ENCODE measurements at regions of chr22 and their contacts with region 1.

Region 1: GRCh38 chr22:29883045-29883774 is at the start of gene MTMR3:
- DNase-seq: peak; percentile 95
- H3K4me3 ChIP-seq: peak within 1 kb of the TSS; percentile 98 to 100 (median 98)
- H3K27ac ChIP-seq: peak within 1 kb of the TSS; percentile 94 to 99 (median 96)
- H3K4me1 ChIP-seq: peaks cover 0 to 42% (median 38%) of the 10 kb centered on the region in 4 donors
- H3K27me3 ChIP-seq: no peaks in the 10 kb centered on the region
- CTCF ChIP-seq: peak in 3 of 4 experiments; percentile 18 to 62 (median 41)
- EP300 ChIP-seq: no peak
- POLR2A ChIP-seq: peak in 1 of 2 donors; percentile 20
- total RNA-seq, gene MTMR3: 40.7 to 52.3 (median 41.3) TPM

Region 2: DNA sequence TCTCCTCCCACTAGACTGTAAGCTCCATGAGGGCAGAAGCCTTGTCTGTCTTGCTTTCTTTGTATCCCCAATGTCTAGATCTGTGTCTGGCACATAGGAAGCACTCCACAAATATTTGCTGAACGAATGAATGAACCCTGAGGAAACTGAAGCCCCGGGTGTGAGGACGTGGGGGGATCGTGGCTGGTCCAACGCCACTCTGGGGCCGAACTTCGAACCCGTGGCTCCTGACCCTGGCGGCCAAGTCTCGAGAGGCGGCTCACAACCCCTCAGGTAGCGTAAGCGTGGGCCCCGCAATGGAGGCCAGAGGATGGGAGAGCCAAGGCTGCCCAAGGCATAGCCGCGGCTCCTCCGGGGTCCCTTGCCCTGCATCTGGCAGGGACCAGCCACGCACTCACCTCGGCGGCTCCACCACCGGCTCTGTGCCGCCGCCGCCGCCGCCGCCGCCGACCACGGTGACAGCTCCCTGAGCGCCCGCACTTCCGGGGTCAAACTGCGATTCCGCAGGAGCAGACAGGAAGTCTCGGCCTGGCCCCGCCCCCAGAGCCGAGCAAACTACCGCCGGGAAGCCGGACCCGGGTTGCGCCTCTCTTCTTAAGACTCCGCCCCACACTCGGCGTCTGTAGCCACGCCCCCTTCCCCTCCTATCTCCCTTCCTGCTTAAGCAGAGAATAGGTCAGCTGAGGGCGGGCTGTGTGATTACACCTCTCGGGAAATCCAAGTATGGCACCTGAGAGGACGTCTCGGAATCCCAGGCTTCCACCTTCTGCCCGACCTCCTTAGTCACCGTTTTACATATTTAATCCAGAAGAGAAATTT is 45.2 kb before region 1 on chr22 and contains the start of gene ASCC2:
- intact Hi-C with region 1: loop called (anchors 2 kb)
- DNase-seq: peak; percentile 99
- H3K4me3 ChIP-seq: peak within 1 kb of the TSS; percentile 76 to 98 (median 95)
- H3K27ac ChIP-seq: peak within 1 kb of the TSS; percentile 75 to 86 (median 79)
- H3K4me1 ChIP-seq: peaks cover 0 to 32% (median 21%) of the 10 kb centered on the region in 4 donors
- H3K27me3 ChIP-seq: no peaks in the 10 kb centered on the region
- CTCF ChIP-seq: peak in 1 of 4 experiments; percentile 31
- EP300 ChIP-seq: peak in 1 of 4 donors; percentile 1
- POLR2A ChIP-seq: peak; percentile 32 to 53
- total RNA-seq, gene ASCC2: 15.0 to 37.7 (median 20.5) TPM

Measured in sigmoid colon (tissue), 7 donors.